HCT116 (cell line): ENCODE measurements at regions of chr19 and their contacts with region 1.

Region 1: GRCh38 chr19:15629003-15629880 is 11.5 kb upstream of the CYP4F3 start:
- DNase-seq: peak; percentile 51
- ATAC-seq: peak; percentile 96
- H3K4me3 ChIP-seq: no peak overlapping the region
- H3K27ac ChIP-seq: no peak overlapping the region
- H3K4me1 ChIP-seq: peaks cover 0 to 4% of the 10 kb centered on the region in 2 experiments; a peak in 1 of 4 replicates
- H3K27me3 ChIP-seq: 0 out of 2 replicates have a peak, but pooled peaks cover 6% of the 10 kb centered on the region
- CTCF ChIP-seq: peak; percentile 90 to 99 (median 97)
- POLR2A ChIP-seq: no peak
- RAD21 ChIP-seq: peak; percentile 96

Region 2: GRCh38 chr19:16025108-16026101 is 396.2 kb after region 1 on chr19:
- CTCF ChIA-PET with region 1: interaction called, 5 read pairs
- POLR2A ChIA-PET with region 1: no interaction called
- RAD21 ChIA-PET with region 1: no interaction called
- intact Hi-C with region 1: loop called (anchors 1 kb)
- DNase-seq: peak; percentile 56
- ATAC-seq: peak; percentile 99
- H3K4me3 ChIP-seq: no peak overlapping the region
- H3K27ac ChIP-seq: no peak overlapping the region
- H3K4me1 ChIP-seq: peaks cover 0 to 11% of the 10 kb centered on the region in 2 experiments; a peak in 2 of 4 replicates
- H3K27me3 ChIP-seq: no peaks in the 10 kb centered on the region
- CTCF ChIP-seq: peak; percentile 56 to 81 (median 63); a peak in 5 of 6 replicates
- POLR2A ChIP-seq: no peak
- RAD21 ChIP-seq: peak; percentile 75